Colonic mucosa (tissue), 4 donors: ENCODE measurements at regions of chr2 and their contacts with region 1.

Region 1: GRCh38 chr2:15636972-15637785 is 45.5 kb downstream of the DDX1 start:
- DNase-seq: peak; percentile 67
- H3K4me3 ChIP-seq: no peak overlapping the region
- H3K27ac ChIP-seq: no peak overlapping the region
- H3K4me1 ChIP-seq: no peaks in the 10 kb centered on the region
- H3K27me3 ChIP-seq: no peaks in the 10 kb centered on the region
- CTCF ChIP-seq: peak; percentile 69

Region 2: DNA sequence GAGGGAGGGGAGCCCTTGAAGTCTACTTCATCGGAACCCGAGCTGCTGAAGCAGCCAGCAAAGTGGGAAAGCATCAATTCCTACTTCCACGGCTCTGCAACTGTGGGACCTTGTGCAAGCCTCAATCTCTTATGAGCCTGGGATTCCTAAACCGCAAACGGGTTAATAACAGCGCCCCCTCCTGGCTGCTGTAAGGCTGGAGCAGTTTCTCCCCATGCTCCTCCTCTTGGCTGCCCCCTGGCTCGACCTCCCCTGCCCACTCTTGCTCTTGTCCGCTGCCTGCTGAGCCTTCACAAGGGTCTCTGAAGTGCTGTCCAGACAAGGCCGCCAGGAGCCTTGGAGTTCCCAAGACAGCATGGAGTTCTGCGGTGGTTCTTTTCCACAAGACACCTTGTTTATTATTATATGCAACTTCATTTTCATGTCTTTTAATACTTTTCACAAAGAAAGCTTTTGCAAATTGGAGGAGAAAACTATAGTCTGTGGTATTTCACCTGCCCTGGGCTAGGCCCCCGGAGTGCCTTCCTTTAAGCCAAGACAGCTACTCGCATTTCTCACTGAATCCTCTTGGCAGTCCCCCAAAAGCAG is 111.7 kb after region 1 on chr2:
- intact Hi-C with region 1: loop called (anchors 10 kb)
- DNase-seq: peak; percentile 31
- H3K4me3 ChIP-seq: no peak overlapping the region
- H3K27ac ChIP-seq: no peak overlapping the region
- H3K4me1 ChIP-seq: no peaks in the 10 kb centered on the region
- H3K27me3 ChIP-seq: no peaks in the 10 kb centered on the region
- CTCF ChIP-seq: peak; percentile 22

Region 3: DNA sequence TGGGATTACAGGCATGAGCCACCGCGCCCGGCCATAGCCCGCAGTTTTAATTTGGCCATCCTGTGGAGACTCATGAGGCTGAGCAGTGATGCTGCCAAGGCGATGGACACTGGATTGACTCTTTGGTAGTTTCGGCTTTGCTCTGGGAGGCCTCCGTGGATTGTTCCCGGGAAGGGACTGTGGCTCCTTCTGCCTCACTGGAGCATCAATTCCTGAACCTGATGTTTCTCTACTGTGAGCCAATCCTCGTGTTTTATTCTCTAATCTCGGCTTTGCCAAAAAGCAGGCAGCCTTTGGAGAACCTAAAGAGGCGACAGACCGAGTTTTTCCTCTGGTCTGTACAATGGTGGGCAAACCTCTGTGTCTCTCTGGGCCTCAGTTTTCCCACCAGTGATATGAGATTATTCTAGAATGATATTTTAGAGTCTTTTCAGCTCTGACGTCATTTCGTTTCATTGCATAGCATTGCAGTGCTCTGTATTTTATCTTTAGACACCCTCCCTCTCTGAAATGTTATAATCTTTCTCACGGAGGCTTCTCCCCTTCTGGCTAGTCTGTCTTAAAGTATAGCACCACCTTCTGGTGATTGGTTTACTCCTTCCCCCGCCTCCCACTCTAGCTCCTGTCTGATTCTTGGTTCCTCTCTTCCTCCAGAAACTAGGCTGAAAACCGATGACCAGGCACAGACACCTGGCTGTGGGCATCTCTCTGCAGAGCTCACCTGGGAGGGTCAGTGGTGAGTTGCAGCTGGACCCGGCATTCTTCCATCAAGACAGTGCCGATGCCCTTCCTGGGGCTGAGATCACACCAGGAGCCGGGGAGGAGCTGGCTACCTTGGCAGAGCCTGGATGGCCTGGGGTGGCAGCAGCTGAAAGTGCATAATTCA is 644.5 kb after region 1 on chr2:
- intact Hi-C with region 1: loop called (anchors 5 kb)
- DNase-seq: no peak
- H3K4me3 ChIP-seq: no peak overlapping the region
- H3K27ac ChIP-seq: no peak overlapping the region
- H3K4me1 ChIP-seq: no peaks in the 10 kb centered on the region
- H3K27me3 ChIP-seq: no peaks in the 10 kb centered on the region
- CTCF ChIP-seq: peak; percentile 44

Region 4: DNA sequence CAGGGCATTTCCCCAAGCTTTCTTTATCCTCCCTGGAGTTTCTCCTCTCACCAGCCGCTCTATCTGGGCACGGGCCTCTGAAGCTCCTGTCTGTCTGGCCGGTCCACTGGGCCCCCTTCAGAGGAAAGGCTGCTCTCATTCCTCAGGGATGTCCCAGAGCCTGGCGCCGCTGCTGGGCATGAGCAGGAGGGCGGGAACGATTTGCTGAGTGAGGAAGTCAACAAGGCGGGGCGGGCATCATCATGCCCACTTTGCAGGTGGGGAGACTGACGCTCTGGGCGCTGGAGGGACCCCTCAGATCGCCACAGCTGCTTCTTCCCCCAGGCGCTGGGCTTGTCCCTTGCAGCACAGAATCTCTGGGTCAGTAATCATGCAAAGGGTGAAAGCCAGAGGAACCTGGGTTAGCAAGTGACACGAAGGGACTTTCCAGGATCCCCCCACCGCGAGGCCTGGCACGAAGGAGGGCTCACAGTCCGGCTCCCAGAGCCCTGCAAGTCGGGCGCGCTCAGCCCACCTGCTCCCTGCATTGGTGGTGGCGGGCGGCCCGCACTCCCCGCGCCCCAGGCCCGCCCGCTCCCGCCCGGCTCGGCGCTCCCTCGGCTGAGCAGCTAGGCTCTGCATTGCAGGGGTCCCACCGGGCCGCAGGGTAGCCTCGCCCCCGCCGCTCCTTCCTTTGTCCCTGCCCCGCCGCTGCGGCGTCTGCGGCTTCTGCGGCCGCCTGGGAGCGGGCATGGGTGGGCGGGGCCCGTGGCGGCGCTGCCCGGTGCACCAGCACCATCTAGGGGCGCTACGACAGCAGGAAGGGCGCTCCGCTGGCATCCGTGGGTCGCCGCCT is 870.7 kb after region 1 on chr2:
- intact Hi-C with region 1: loop called (anchors 2 kb)
- DNase-seq: peak; percentile 41
- H3K4me3 ChIP-seq: peak overlapping the region; percentile 41
- H3K27ac ChIP-seq: no peak overlapping the region
- H3K4me1 ChIP-seq: no peaks in the 10 kb centered on the region
- H3K27me3 ChIP-seq: peaks cover 23% of the 10 kb centered on the region
- CTCF ChIP-seq: peak; percentile 63

Region 5: GRCh38 chr2:16608661-16609643 is 971.8 kb after region 1 on chr2:
- intact Hi-C with region 1: loop called (anchors 5 kb)
- DNase-seq: peak; percentile 84
- H3K4me3 ChIP-seq: peak overlapping the region; percentile 33
- H3K27ac ChIP-seq: no peak overlapping the region
- H3K4me1 ChIP-seq: no peaks in the 10 kb centered on the region
- H3K27me3 ChIP-seq: no peaks in the 10 kb centered on the region
- CTCF ChIP-seq: peak; percentile 98